Left colon (tissue), 2 donors: ENCODE measurements at regions of chr13 and their contacts with region 1.

Region 1: GRCh38 chr13:30306762-30307193 is 573 bp downstream of the KATNAL1 start:
- DNase-seq: peak; percentile 93 to 96
- ATAC-seq: peak; percentile 97

Region 2: GRCh38 chr13:30388406-30389283 is 81.9 kb after region 1 on chr13:
- intact Hi-C with region 1: loop called in 1 of 2 experiments (anchors 10 kb)
- DNase-seq: peak in 1 of 2 donors; percentile 53
- ATAC-seq: no peak

Region 3: GRCh38 chr13:30774214-30774730 is 467.5 kb after region 1 on chr13:
- intact Hi-C with region 1: no loop called
- DNase-seq: no peak
- ATAC-seq: no peak